Activated naive CD4-positive, alpha-beta T cell treated with anti-CD3 and anti-CD28 coated beads, Interleukin-2, amount 10 ng/mL, durations not matched to agents 7 days and 5 days (primary cell): ENCODE measurements at regions of chr9 and their contacts with region 1.

Region 1: DNA sequence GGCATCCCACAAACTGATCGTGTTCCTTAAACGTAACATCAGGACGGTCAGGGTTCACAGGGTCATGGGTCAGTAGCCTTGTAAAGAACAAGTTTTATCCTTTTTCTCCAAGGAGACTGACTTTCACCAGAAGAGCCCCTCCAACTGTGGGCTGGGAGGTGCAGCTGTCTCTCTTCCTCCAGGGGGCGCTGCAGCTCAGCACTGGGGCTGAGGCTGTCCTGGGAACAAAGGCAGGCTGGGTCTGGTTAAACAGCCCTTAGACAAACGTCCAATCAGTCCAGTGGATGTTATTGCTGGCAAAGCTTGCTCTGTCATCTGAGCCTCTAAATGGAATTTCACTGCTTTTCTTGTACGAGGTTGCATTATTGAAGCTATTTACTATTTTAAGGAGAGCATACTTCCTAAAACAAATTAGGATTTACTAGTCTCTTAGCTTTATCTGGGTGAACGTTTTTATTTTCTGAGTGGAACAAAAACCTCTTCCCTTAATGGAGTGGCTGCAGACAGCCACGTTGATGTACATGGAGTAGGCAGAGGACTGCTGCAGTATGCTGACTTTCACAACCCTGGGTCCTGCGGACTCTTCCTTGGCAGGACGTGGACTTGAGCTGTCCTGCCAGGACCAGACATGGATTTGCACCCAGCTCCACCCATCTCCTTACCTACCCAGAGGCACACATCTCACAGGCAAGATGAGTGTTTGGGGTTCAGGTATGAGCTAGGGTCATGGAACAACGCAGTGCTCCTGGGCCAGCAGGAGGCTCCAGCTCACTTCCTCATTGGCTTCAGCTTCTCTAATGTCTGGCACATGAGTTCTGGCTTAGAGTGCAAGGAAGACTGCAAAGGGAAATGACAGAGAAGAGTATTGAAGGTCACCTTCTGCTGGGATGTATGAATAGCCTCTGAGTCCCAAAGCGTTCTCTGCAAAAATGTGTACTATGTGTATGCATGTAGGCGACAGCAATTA is 7.8 kb downstream of the EXOSC2 start:
- DNase-seq: peak; percentile 77
- H3K4me3 Mint-ChIP-seq: no peak overlapping the region
- H3K27ac Mint-ChIP-seq: no peak overlapping the region
- H3K4me1 Mint-ChIP-seq: peaks cover 19% of the 10 kb centered on the region
- H3K27me3 Mint-ChIP-seq: no peaks in the 10 kb centered on the region

Region 2: DNA sequence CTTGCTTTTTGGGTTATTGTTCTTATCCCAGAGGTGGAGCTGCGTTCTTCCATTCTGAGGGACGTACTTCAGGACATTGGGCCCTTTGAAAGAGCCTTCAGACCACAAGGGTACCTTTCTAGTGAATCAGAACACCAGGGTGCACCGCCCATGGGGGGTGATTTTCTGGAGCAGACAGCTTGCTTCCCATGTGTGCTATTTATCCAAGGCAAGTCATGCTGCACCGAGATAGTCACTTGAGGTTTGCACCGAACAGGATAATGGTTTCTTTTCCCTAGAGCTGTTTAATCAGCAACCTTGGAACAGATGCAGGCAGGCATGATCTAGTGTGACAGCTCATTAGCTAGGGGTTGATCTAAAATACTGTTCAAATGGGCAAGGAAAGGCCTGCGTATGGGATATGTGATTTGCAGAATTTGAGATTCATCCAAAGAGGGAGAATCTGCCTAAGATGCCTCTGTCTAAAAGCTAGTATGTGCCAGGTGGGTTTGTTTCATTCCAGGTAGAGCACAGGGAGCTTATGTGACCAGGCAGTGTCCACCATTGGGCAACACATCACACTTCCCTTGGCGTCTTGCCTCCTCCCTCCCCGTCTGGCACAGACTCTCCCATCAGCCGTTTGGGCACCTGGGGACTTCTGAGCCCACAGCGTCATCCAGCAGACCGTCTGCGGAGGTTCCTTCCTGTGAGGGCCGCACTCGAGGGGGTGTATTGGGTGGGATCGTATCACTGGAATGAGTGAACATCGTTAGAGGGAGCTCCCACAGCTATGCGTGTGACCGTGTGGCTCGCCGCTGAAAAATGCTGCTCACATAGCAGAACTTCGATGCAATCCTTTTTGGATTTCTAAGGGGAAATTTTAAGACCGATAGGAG is 156.8 kb after region 1 on chr9:
- CTCF ChIA-PET with region 1: interaction called, 39 read pairs
- DNase-seq: no peak
- H3K4me3 Mint-ChIP-seq: no peak overlapping the region
- H3K27ac Mint-ChIP-seq: no peak overlapping the region
- H3K4me1 Mint-ChIP-seq: no peaks in the 10 kb centered on the region
- H3K27me3 Mint-ChIP-seq: no peaks in the 10 kb centered on the region

Region 3: DNA sequence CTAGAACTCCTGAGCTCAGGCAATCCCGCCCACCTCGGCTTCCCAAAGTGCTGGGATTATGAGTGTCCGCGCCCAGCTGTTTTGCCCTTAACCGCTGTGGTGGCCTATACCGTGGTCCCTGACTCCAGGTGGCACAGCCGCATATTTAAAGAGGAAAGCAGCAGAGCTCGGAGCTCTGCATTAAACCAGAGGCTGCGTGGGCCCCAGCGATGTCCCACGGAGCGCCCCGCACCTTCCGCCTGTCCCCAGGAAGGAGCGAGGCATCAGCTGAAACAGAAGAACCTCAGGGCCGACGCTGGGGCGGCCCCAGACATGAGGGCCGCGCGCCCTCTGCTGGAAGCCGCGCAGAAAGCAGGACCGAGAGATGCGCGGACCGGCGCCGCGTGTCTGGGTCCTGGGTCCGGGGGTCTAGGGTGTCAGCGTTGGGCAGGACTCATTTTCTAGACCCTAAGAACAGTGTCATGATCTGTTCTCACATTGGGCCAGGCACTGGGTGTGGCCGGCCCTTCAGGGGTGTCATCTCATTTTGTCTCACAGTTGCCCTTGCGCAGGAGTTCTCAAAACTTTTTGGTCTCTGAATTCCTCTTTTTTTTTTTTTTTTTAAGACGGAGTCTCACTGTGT is 345.4 kb after region 1 on chr9:
- CTCF ChIA-PET with region 1: interaction called, 13 read pairs
- DNase-seq: peak; percentile 78
- H3K4me3 Mint-ChIP-seq: no peak overlapping the region
- H3K27ac Mint-ChIP-seq: no peak overlapping the region
- H3K4me1 Mint-ChIP-seq: peaks cover 13% of the 10 kb centered on the region
- H3K27me3 Mint-ChIP-seq: peaks cover 28% of the 10 kb centered on the region